Mammary epithelial cell (primary cell): ENCODE measurements at regions of chr19 and their contacts with region 1.

Region 1: DNA sequence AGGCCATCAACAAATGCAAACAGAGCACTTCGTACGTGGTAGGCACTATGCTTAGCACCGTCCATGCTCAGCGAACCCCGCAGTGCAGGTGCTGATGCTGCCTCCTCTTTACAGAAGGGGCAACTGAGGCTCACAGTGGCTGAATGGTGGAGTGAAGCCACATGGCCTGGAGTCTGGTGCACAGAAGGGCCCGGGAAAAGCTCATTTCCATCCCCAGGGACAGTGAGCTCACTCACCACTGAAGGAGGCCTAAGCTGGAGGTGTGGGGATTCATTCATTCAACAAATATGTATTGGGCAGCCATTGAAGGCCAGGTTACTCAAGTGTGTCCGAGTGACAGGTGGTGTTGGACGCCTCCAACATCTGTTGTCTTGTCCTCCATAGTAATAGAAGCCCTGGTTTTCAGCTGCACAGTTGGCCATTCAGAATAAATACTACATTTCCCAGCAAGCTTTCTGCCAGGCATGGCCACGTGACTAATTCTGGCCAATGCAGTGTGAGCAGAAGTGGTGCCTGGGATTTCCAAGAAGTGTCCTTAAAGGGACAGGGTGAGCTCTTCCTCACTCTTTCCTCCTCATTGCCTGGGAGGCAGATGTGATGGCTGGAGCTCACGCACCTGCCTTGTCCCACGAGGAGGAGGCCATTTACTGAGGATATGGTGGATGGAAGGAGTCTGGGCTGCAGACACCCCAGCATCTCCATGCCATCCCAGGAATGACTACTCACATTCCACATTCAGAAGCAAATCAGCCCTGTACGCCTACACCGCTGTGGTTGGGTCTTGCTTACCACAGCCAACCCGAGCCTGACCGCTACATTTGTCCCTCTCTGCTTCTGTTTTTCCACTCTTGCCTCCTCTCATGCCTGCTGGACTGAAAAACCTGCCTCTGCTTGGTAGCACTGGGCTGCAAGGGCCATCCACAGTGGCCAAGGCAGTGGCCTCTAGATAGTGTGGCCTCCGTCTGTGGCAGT is 2.3 kb upstream of the ZNRF4 start:
- DNase-seq: no peak
- H3K4me3 ChIP-seq: no peak overlapping the region
- H3K27ac ChIP-seq: no peak overlapping the region
- H3K4me1 ChIP-seq: no peaks in the 10 kb centered on the region
- H3K27me3 ChIP-seq: peaks cover 5% of the 10 kb centered on the region
- CTCF ChIP-seq: no peak

Region 2: GRCh38 chr19:5250127-5250659 is 202.7 kb before region 1 on chr19:
- CTCF ChIA-PET with region 1: no interaction called
- dilution Hi-C with region 1: loop called (anchors 10 kb)
- in situ Hi-C with region 1: no loop called
- intact Hi-C with region 1: no loop called
- DNase-seq: no peak
- H3K4me3 ChIP-seq: no peak overlapping the region
- H3K27ac ChIP-seq: no peak overlapping the region
- H3K4me1 ChIP-seq: no peaks in the 10 kb centered on the region
- H3K27me3 ChIP-seq: peaks cover 2% of the 10 kb centered on the region
- CTCF ChIP-seq: no peak

Region 3: GRCh38 chr19:5394551-5395505 is 58.1 kb before region 1 on chr19:
- CTCF ChIA-PET with region 1: no interaction called
- dilution Hi-C with region 1: no loop called
- in situ Hi-C with region 1: no loop called
- intact Hi-C with region 1: no loop called
- DNase-seq: no peak
- H3K4me3 ChIP-seq: no peak overlapping the region
- H3K27ac ChIP-seq: no peak overlapping the region
- H3K4me1 ChIP-seq: no peaks in the 10 kb centered on the region
- H3K27me3 ChIP-seq: peaks cover 3% of the 10 kb centered on the region
- CTCF ChIP-seq: no peak

Region 4: DNA sequence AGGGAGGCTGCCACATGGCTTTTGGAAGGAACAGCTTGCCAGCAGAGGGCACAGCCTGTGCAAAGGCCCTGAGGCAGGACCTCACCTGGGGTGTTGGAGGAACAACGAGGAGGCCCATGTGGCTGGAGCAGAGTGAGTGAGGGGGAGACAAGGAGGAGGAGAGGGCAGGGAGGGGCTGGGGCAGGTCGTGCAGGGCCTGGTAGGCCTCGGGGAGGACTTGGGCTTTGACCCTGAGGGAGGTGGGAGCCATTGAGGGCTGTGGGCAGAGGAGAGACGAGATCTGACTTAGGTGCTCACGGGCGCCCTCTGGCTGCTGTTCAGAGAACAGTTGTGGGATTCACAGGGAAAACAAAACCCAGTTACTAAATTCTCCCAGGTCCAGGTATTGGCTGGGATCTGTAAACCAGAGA is 27.6 kb after region 1 on chr19:
- CTCF ChIA-PET with region 1: no interaction called
- dilution Hi-C with region 1: no loop called
- in situ Hi-C with region 1: no loop called
- intact Hi-C with region 1: no loop called
- DNase-seq: no peak
- H3K4me3 ChIP-seq: no peak overlapping the region
- H3K27ac ChIP-seq: no peak overlapping the region
- H3K4me1 ChIP-seq: no peaks in the 10 kb centered on the region
- H3K27me3 ChIP-seq: peaks cover 13% of the 10 kb centered on the region
- CTCF ChIP-seq: peak; percentile 43 to 54

Region 5: DNA sequence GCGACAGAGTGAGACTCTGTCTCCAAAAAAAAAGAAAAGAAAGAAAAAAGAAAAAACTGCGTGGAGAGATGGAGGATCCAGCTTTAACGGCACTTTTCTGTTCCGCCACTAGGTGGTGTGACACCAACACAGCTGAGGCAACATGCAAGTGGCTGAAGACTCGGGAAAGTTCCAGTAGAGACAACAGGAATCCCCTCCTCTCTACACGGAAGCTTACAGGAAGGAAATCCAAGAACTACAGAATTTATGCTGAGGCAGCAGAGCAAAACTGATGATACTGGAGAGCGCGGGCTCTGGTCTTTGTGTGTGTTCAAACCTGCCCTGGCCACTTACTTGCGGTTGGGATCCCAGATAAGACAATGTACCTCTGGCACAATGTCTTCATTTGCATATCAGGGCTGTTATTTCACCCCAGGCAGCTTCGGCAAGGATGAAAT is 515.1 kb after region 1 on chr19:
- CTCF ChIA-PET with region 1: no interaction called
- dilution Hi-C with region 1: no loop called
- in situ Hi-C with region 1: no loop called
- intact Hi-C with region 1: no loop called
- DNase-seq: peak; percentile 67
- H3K4me3 ChIP-seq: no peak overlapping the region
- H3K27ac ChIP-seq: peak overlapping the region; percentile 31
- H3K4me1 ChIP-seq: peaks cover 24% of the 10 kb centered on the region
- H3K27me3 ChIP-seq: no peaks in the 10 kb centered on the region
- CTCF ChIP-seq: peak; percentile 86 to 96